Activated T-helper 1 cell treated with anti-CD3 and anti-CD28 coated beads, Interleukin-12 subunit alpha, Interleukin-12 subunit beta, Interleukin-2, Interleukin-4 antibody, amounts not matched to agents 30 ng/mL and 10 ng/mL and 1 ng/mL, durations not matched to agents 14 hours and 24 hours and 36 hours (primary cell): ENCODE measurements at regions of chr2 and their contacts with region 1.

Region 1: DNA sequence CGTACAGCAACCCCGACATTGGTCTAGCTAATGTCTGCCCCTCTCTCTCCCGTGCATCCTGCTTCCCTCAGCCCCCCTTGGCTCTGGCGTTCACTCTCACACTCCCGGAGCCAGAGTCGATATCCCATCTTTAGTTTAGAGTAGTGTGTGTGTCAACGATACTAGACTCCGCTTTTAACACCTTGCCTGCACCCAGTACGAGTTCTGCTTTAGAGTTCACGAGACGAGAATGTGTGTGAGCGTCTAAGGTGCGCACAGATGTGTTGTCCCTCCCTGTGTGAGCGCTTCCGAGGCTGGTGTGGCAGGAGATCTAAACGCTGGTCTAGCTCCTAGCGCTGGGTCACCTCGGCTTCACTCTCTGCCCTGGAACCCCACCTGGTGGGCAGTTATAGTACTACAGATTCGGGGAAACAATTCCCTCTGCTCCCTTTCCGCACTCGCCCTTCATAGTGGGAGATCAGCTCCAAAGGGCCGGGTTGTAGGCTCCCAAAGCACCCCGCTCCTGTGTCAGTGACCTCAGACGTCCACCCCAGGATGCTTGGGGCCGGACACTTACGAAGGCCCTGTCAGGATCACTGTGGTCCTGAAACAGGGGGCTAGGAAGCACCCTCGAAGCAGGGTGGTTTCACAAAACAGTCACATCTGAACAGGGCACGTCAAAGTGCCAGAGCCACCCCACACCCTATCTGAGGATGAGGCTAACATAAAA is 2.6 kb upstream of the CYP26B1 start:
- DNase-seq: peak; percentile 49
- H3K4me3 Mint-ChIP-seq: peak overlapping the region; percentile 32
- H3K27ac Mint-ChIP-seq: peak overlapping the region; percentile 71
- H3K4me1 Mint-ChIP-seq: peaks cover 21% of the 10 kb centered on the region
- H3K27me3 Mint-ChIP-seq: peaks cover 43% of the 10 kb centered on the region

Region 2: DNA sequence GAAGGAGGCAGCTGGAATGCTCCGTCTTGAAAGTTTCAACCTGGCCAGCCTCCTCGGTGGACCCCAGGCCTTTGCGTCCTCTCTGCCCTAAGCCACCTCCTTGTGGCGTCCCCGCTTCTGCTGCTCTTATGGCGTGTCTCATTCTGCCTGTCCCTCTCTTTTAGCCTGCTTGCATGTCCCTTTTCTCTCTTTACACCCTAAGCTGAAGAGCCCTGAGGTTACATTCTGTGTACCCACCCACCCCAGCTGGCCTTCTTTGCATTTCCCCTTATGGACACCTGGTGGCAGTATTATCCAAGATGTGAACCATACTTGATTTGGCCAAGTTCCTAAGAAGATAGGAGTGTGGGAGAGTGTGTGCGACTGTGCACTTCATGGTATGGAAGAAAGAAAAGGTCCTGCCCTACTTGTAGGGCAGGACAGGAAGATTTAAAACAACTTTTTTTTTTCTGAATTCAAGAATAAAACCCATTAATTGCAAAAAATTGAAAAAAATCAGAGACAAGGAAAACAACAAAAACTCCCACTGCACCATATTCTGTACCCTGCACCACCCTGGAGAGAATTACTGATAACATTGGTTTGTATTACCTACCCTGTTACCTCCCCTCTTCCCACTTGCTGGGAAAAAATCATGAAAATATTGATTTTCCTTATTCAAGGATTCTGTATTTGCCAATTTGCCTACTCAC is 619.5 kb before region 1 on chr2:
- intact Hi-C with region 1: loop called (anchors 5 kb)
- DNase-seq: no peak
- H3K4me3 Mint-ChIP-seq: no peak overlapping the region
- H3K27ac Mint-ChIP-seq: no peak overlapping the region
- H3K4me1 Mint-ChIP-seq: no peaks in the 10 kb centered on the region
- H3K27me3 Mint-ChIP-seq: peaks cover 11% of the 10 kb centered on the region

Region 3: DNA sequence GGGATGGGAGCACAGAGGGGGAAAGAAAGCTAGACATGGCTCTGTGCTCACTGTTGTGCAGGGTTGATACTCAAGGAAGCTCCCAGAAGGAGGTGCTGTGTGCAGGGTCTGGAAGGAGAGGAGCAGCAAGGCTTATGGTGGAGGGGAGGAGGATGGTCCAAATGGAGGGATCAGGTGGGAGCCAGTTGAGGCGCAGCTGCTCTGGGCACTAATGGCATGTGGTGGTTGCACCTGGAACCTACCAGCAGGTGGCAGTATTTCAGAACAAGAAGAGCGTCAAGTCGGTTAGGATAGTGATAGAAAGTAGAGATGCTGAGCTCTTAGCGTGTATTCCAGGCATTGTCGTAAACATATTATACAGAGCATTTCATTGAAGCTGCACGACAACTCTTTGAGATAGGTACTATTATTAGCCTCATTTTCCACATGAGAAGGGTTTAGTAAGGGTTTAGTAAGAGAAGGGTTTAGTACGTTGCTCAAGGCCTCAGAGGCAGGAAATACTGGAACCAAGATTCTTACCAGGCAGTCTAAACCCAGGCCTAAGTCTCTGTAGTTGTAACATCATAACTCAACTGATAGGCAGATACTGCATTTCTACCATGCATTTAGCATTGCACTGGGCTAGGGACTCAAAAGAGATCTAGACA is 226.3 kb before region 1 on chr2:
- intact Hi-C with region 1: loop called (anchors 1 kb)
- DNase-seq: peak; percentile 17
- H3K4me3 Mint-ChIP-seq: no peak overlapping the region
- H3K27ac Mint-ChIP-seq: no peak overlapping the region
- H3K4me1 Mint-ChIP-seq: no peaks in the 10 kb centered on the region
- H3K27me3 Mint-ChIP-seq: no peaks in the 10 kb centered on the region

Region 4: GRCh38 chr2:72579591-72580180 is 429.4 kb after region 1 on chr2:
- intact Hi-C with region 1: loop called (anchors 1 kb)
- DNase-seq: no peak
- H3K4me3 Mint-ChIP-seq: no peak overlapping the region
- H3K27ac Mint-ChIP-seq: no peak overlapping the region
- H3K4me1 Mint-ChIP-seq: no peaks in the 10 kb centered on the region
- H3K27me3 Mint-ChIP-seq: no peaks in the 10 kb centered on the region

Region 5: GRCh38 chr2:72745679-72746368 is 595.5 kb after region 1 on chr2:
- intact Hi-C with region 1: loop called (anchors 5 kb)
- DNase-seq: no peak
- H3K4me3 Mint-ChIP-seq: no peak overlapping the region
- H3K27ac Mint-ChIP-seq: no peak overlapping the region
- H3K4me1 Mint-ChIP-seq: no peaks in the 10 kb centered on the region
- H3K27me3 Mint-ChIP-seq: no peaks in the 10 kb centered on the region